ENCODE measurements at regions of chr21 and their contacts with region 1.

Region 1: DNA sequence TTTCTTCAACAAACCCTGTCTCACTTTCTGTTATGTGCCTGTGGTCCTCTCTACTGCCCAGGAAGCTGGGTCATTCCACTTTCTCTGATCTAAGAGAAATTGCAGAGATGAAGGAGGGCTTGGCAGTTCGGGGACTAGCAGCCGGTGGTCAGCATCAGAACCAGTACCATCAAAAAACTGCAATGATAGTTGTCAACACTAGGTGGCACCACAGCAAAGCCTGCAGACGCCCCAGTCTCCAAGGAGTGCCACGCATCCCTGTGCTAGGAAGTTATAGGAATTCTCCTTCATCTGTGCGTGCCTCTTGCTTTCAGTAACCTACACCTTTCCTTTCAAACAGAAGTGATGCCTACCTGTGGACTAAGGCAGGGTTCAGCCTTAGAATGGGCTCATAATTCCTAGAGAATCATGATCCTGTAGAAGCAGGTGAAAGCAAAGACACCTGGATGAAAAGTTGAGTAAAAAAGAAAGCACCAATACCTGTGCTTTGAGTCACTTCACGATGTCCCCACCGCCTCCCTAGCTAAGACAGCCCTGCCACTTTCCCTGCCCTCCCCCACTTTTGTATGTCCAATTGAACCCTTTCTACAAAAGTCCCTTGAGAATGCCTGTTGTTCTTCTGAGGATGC is 129.2 kb downstream of the ADAMTS1 start:
- DNase-seq: peak in 4 of 6 donors; percentile 23 to 44 (median 28)
- ATAC-seq: peak; percentile 79 to 95 (median 92)
- H3K4me3 ChIP-seq: no peak overlapping the region
- H3K27ac ChIP-seq: no peak overlapping the region
- H3K4me1 ChIP-seq: no peaks in the 10 kb centered on the region
- H3K27me3 ChIP-seq: no peaks in the 10 kb centered on the region
- CTCF ChIP-seq: peak; percentile 58 to 68 (median 62)

Region 2: GRCh38 chr21:25615880-25616279 is 1100.1 kb before region 1 on chr21:
- intact Hi-C with region 1: loop called in 1 of 3 experiments (anchors 10 kb)
- DNase-seq: no peak
- ATAC-seq: no peak
- H3K4me3 ChIP-seq: no peak overlapping the region
- H3K27ac ChIP-seq: no peak overlapping the region
- H3K4me1 ChIP-seq: no peaks in the 10 kb centered on the region
- H3K27me3 ChIP-seq: no peaks in the 10 kb centered on the region
- CTCF ChIP-seq: no peak

Region 3: DNA sequence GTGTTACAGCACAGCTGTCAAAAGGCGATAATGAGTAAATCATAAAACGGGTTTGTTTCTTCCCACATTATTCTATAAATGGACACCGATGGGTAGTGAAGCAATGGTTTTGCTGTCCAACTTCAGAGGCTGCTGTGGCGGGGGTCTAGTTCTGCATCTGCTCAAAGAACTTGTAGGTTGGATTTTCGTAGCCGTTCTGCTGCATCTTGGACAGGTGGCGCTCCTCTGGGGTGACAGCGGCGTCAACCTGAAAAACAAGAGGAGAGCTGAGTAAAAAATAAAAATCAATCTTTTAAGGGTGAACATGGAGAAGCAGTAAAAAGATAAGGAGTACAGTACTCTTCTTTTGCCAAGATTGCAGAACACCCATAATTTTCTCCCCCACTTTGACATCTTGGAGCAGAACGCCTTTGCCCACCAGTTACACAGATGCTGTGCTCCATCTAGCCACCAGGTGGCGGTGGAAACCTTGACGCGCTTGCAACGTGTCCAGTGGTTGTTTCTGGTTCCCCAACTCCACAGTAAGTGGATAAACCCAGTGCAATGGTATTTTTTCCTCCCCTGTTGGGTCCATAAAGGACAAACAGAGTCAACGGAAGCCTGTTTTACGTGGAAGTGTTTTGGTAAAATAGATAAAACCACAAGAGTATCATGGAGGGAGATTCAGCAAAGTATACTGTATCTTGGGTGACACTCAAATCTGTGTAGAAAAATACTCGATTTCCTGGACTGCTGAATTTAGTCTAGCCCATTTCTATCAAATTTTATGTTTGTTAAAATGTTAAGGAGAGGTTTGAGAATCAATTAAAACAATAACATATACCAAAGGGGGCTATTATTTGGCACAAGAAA is 834.2 kb before region 1 on chr21:
- intact Hi-C with region 1: loop called in 2 of 3 experiments (anchors 5 kb)
- DNase-seq: peak; percentile 26 to 82 (median 62)
- ATAC-seq: peak; percentile 78 to 97 (median 92)
- H3K4me3 ChIP-seq: no peak overlapping the region
- H3K27ac ChIP-seq: no peak overlapping the region
- H3K4me1 ChIP-seq: no peaks in the 10 kb centered on the region
- H3K27me3 ChIP-seq: no peaks in the 10 kb centered on the region
- CTCF ChIP-seq: peak; percentile 80 to 87 (median 84)

Region 4: GRCh38 chr21:25887166-25887565 is 828.8 kb before region 1 on chr21:
- intact Hi-C with region 1: loop called in 2 of 3 experiments (anchors 5 kb)
- DNase-seq: no peak
- ATAC-seq: no peak
- H3K4me3 ChIP-seq: no peak overlapping the region
- H3K27ac ChIP-seq: no peak overlapping the region
- H3K4me1 ChIP-seq: no peaks in the 10 kb centered on the region
- H3K27me3 ChIP-seq: no peaks in the 10 kb centered on the region
- CTCF ChIP-seq: no peak

Region 5: GRCh38 chr21:26469789-26470188 is 246.2 kb before region 1 on chr21:
- intact Hi-C with region 1: no loop called
- DNase-seq: no peak
- ATAC-seq: peak in 2 of 4 donors; percentile 52 to 72
- H3K4me3 ChIP-seq: no peak overlapping the region
- H3K27ac ChIP-seq: no peak overlapping the region
- H3K4me1 ChIP-seq: no peaks in the 10 kb centered on the region
- H3K27me3 ChIP-seq: no peaks in the 10 kb centered on the region
- CTCF ChIP-seq: no peak